Activated CD4-positive, alpha-beta T cell treated with anti-CD3 and anti-CD28 coated beads for 36 hours (primary cell): ENCODE measurements at regions of chr17 and their contacts with region 1.

Region 1: GRCh38 chr17:81253358-81254131 is 14.4 kb downstream of the NDUFAF8 start:
- DNase-seq: peak; percentile 75
- ATAC-seq: peak; percentile 78
- H3K4me3 Mint-ChIP-seq: no peak overlapping the region
- H3K27ac Mint-ChIP-seq: no peak overlapping the region
- H3K4me1 Mint-ChIP-seq: peaks cover 8% of the 10 kb centered on the region
- H3K27me3 Mint-ChIP-seq: no peaks in the 10 kb centered on the region

Region 2: GRCh38 chr17:81294856-81295680 is 41.5 kb after region 1 on chr17 and contains the start of gene SLC38A10:
- CTCF ChIA-PET with region 1: interaction called, 3 read pairs
- POLR2A ChIA-PET with region 1: no interaction called
- intact Hi-C with region 1: loop called (anchors 1 to 5 kb)
- DNase-seq: peak; percentile 95
- ATAC-seq: peak; percentile 91
- H3K4me3 Mint-ChIP-seq: peak within 1 kb of the TSS; percentile 89
- H3K27ac Mint-ChIP-seq: peak within 1 kb of the TSS; percentile 96
- H3K4me1 Mint-ChIP-seq: peaks cover 36% of the 10 kb centered on the region
- H3K27me3 Mint-ChIP-seq: no peaks in the 10 kb centered on the region
- total RNA-seq, gene SLC38A10: 47.6 to 52.9 TPM

Region 3: DNA sequence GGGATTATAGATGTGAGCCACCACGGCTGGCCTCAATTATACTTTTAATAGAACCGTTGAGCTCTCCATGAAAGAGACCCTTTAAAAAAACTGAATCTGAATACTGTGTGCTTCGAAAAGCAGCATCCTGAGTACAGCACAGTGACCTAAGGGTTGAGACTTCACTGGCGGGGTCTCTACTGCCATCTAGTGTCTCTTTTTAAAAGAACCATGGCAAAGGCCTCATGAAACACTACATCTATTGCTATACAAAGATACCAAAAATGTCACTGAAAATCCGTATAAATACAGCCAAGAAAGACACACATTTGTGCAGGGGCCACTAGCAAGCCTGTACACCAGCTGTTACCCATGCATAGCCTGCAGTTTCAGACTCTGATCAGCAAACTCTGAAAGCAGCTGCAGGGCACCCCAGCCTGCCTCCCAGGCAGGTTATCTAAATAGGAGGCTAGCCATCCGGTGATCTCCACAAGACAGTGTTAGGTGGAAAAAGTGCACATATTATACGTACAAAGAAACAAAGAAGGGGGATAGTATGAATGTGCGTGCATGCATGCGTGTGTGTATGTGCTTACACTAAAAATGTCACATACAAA is 348.1 kb after region 1 on chr17:
- CTCF ChIA-PET with region 1: no interaction called
- POLR2A ChIA-PET with region 1: no interaction called
- intact Hi-C with region 1: loop called (anchors 1 to 2 kb)
- DNase-seq: peak; percentile 48
- ATAC-seq: peak; percentile 99
- H3K4me3 Mint-ChIP-seq: no peak overlapping the region
- H3K27ac Mint-ChIP-seq: no peak overlapping the region
- H3K4me1 Mint-ChIP-seq: no peaks in the 10 kb centered on the region
- H3K27me3 Mint-ChIP-seq: no peaks in the 10 kb centered on the region